ENCODE measurements at regions of chr2 and their contacts with region 1.

Region 1: DNA sequence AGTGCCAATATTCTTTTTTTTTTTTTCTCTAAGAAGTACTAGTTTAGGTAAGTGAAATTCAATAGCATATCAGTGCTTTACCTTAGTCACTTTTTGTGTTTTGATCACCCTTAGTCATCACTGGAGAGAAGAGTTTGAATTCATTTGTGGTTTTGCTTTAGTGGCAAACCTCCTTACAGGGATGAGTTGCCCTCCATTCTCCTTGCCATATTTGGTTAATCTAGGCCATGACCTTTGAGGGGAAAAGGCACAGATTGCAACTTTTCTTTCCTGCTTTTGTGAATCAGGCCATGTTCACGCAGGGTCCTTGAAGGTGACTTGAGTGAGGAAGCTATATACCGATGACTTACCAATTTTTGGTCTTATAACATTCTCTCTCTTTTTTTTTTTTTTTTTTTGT is 34.4 kb downstream of the PLEKHA3 start:
- DNase-seq: peak; percentile 70
- H3K4me3 Mint-ChIP-seq: peak overlapping the region; percentile 36
- H3K27ac Mint-ChIP-seq: peak overlapping the region; percentile 87
- H3K4me1 Mint-ChIP-seq: peaks cover 27% of the 10 kb centered on the region
- H3K27me3 Mint-ChIP-seq: no peaks in the 10 kb centered on the region

Region 2: GRCh38 chr2:178457390-178457886 is 57.2 kb before region 1 on chr2:
- CTCF ChIA-PET with region 1: no interaction called
- POLR2A ChIA-PET with region 1: no interaction called
- intact Hi-C with region 1: no loop called
- DNase-seq: no peak
- H3K4me3 Mint-ChIP-seq: no peak overlapping the region
- H3K27ac Mint-ChIP-seq: no peak overlapping the region
- H3K4me1 Mint-ChIP-seq: no peaks in the 10 kb centered on the region
- H3K27me3 Mint-ChIP-seq: no peaks in the 10 kb centered on the region

Region 3: DNA sequence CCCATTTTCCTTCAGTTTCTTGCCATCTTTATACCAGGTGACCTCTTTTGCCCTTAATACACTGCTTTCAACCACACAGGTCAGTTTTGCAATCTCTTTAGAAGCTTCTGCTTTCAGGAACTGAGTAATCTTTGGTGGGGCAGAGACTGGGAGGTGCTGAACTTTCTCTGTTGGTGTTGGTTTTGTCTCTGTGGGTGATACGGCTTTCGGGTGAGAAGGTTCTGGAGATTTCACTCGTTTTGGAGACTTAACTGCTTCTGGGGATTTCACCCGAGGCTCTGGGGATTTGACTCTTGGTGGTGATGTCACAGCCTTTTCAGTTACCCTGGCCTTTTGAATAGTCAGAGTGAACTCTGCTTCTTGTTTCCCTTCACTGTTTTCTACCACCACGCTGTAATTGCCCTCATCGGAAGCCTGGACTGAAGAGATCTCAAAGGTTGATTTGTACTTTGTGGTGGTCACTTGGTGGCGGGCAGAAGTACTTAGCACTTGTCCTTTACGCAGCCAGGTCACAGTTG is 16.0 kb after region 1 on chr2:
- CTCF ChIA-PET with region 1: interaction called, 7 read pairs
- POLR2A ChIA-PET with region 1: interaction called, 8 read pairs
- intact Hi-C with region 1: loop called (anchors 1 kb)
- DNase-seq: peak; percentile 78
- H3K4me3 Mint-ChIP-seq: peak overlapping the region; percentile 9
- H3K27ac Mint-ChIP-seq: peak overlapping the region; percentile 65
- H3K4me1 Mint-ChIP-seq: peaks cover 45% of the 10 kb centered on the region
- H3K27me3 Mint-ChIP-seq: no peaks in the 10 kb centered on the region

Region 4: GRCh38 chr2:179106676-179107428 is 592.2 kb after region 1 on chr2:
- CTCF ChIA-PET with region 1: no interaction called
- POLR2A ChIA-PET with region 1: no interaction called
- intact Hi-C with region 1: loop called (anchors 2 kb)
- DNase-seq: no peak
- H3K4me3 Mint-ChIP-seq: no peak overlapping the region
- H3K27ac Mint-ChIP-seq: peak overlapping the region; percentile 18
- H3K4me1 Mint-ChIP-seq: peaks cover 22% of the 10 kb centered on the region
- H3K27me3 Mint-ChIP-seq: no peaks in the 10 kb centered on the region

Measured in activated CD4-positive, alpha-beta memory T cell treated with anti-CD3 and anti-CD28 coated beads for 36 hours (primary cell).